ENCODE measurements at regions of chr10 and their contacts with region 1.

Region 1: GRCh38 chr10:121886997-121887622 is 40.7 kb downstream of the ATE1 start:
- DNase-seq: peak; percentile 64 to 80
- H3K4me3 ChIP-seq: no peak overlapping the region
- H3K4me3 Mint-ChIP-seq: no peak overlapping the region
- H3K27ac Mint-ChIP-seq: no peak overlapping the region
- H3K4me1 ChIP-seq: peaks cover 8% of the 10 kb centered on the region
- H3K4me1 Mint-ChIP-seq: peaks cover 15% of the 10 kb centered on the region
- H3K27me3 ChIP-seq: no peaks in the 10 kb centered on the region
- H3K27me3 Mint-ChIP-seq: no peaks in the 10 kb centered on the region
- CTCF ChIP-seq: peak; percentile 88 to 93

Region 2: DNA sequence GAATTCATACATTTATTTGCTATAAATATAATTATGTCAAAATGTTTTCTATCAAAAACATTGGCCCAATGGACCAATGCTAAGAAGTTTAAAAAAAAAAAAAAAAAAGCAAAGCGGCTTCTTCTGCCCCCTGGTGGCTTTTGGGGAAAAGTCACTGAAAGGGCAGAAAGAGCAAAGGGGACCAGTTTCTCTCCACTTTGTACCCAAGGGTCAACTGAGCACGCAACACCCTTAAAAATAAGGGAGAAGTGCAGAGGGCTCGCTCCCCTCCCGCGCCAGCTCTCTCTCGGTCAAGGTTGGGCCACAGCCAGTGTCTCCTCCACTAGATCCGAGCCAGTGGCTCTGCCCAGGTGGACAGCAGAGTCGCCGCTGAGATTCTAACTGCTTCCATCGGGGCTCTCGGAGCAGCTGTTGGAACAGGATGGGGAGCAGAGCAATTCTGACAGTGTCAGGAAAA is 152.5 kb before region 1 on chr10:
- CTCF ChIA-PET with region 1: no interaction called
- POLR2A ChIA-PET with region 1: no interaction called
- intact Hi-C with region 1: loop called (anchors 5 kb)
- DNase-seq: peak in 1 of 2 experiments; percentile 57
- H3K4me3 ChIP-seq: peak overlapping the region; percentile 34
- H3K4me3 Mint-ChIP-seq: peak overlapping the region; percentile 76
- H3K27ac Mint-ChIP-seq: peak overlapping the region; percentile 52
- H3K4me1 ChIP-seq: peaks cover 3% of the 10 kb centered on the region; the same call in 1 of the 2 replicates
- H3K4me1 Mint-ChIP-seq: peaks cover 36% of the 10 kb centered on the region
- H3K27me3 ChIP-seq: no peaks in the 10 kb centered on the region
- H3K27me3 Mint-ChIP-seq: no peaks in the 10 kb centered on the region
- CTCF ChIP-seq: peak; percentile 68 to 82

Region 3: GRCh38 chr10:121823993-121824463 is 63.1 kb before region 1 on chr10:
- CTCF ChIA-PET with region 1: interaction called, 9 read pairs
- POLR2A ChIA-PET with region 1: no interaction called
- intact Hi-C with region 1: loop called (anchors 1 kb)
- DNase-seq: peak in 1 of 2 experiments; percentile 59
- H3K4me3 ChIP-seq: no peak overlapping the region
- H3K4me3 Mint-ChIP-seq: no peak overlapping the region
- H3K27ac Mint-ChIP-seq: no peak overlapping the region
- H3K4me1 ChIP-seq: no peaks in the 10 kb centered on the region
- H3K4me1 Mint-ChIP-seq: peaks cover 14% of the 10 kb centered on the region
- H3K27me3 ChIP-seq: no peaks in the 10 kb centered on the region
- H3K27me3 Mint-ChIP-seq: no peaks in the 10 kb centered on the region
- CTCF ChIP-seq: peak; percentile 77